IMR-90 (cell line): ENCODE measurements at regions of chr22 and their contacts with region 1.

Region 1: DNA sequence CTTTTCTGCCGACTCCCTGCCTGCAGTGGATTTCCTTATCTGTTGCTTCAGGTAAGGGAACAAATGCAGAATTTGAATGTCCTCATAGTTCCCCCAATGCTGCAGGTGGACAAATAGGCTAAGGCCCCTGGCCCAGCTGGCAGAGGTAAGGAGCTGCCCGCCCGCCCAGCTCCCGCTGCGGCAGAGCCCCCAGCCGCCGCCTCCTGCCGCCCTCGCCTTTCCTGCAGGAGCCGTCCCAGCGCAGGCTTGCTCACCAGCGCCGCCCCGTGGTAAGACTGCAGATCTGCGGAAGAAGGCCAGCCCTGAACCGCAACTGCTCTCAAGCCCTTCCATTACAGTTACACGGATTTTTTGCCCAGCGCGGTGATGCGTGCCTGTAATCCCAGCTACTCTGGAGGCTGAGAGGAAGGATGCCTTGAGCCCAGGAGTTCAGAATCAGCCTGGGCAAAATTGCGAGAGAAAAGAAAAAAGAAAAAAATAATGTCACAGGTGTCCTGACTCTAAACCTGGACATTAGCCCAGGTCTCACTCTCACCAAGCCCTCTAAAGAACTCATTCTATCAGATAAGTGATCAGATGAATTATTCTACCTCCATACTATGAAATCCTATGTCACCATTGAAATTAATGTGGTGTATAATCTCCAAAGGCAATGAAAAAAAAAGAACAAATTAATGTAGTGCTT is 51.2 kb upstream of the EMID1 start:
- DNase-seq: peak; percentile 51
- ATAC-seq: peak; percentile 95
- H3K4me3 ChIP-seq: no peak overlapping the region
- H3K27ac ChIP-seq: no peak overlapping the region
- H3K4me1 ChIP-seq: no peaks in the 10 kb centered on the region; the same call in 1 of the 2 replicates
- H3K27me3 ChIP-seq: peaks cover under 1% of the 10 kb centered on the region
- CTCF ChIP-seq: peak; percentile 91
- POLR2A ChIP-seq: no peak
- RAD21 ChIP-seq: peak; percentile 83

Region 2: GRCh38 chr22:28855355-28856094 is 299.0 kb before region 1 on chr22:
- CTCF ChIA-PET with region 1: interaction called, 3 read pairs
- POLR2A ChIA-PET with region 1: no interaction called
- dilution Hi-C with region 1: no loop called
- in situ Hi-C with region 1: loop called (anchors 5 kb)
- intact Hi-C with region 1: loop called (anchors 1 kb)
- DNase-seq: peak; percentile 78
- ATAC-seq: peak; percentile 96
- H3K4me3 ChIP-seq: no peak overlapping the region
- H3K27ac ChIP-seq: no peak overlapping the region
- H3K4me1 ChIP-seq: no peaks in the 10 kb centered on the region
- H3K27me3 ChIP-seq: no peaks in the 10 kb centered on the region
- CTCF ChIP-seq: peak; percentile 88
- POLR2A ChIP-seq: no peak
- RAD21 ChIP-seq: peak; percentile 92

Region 3: DNA sequence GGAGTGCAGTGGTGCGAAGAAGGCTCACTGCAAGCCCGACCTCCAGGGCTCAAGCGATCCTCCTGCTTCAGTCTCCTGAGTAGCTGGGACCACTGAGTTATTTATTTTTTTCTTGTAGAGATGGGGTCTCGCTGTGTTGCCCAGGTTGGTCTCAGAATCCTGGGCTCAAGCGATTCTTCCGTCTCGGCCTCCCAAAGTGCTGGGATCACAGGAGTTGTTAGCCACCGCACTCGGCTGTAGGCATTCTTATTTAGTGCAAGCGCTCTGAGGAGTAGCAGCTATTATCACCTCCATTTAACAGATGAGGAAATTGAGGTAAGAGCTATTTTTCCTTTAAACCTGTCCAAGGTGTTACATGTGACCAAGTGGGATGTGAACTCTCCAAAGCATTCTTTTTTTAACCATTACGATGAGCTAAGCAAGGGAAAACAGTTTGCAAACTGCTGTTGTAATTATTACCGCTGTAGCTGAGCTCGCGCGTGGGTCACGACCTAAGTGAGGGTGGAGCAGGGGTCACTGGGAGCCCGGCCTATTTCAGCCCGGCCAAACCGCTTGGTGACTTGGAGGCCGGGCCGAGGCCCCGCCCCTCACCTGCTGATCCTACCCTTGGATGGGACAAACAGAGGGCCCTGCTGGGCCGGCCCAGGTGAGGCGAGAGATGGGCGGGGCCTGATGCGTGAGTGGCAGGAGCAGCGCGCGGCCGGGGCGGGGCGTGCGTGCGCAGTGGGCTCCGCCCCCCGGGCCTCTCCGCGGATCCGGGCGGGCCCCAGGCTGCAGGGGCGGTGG is 82.1 kb before region 1 on chr22:
- CTCF ChIA-PET with region 1: interaction called, 3 read pairs
- POLR2A ChIA-PET with region 1: no interaction called
- dilution Hi-C with region 1: no loop called
- in situ Hi-C with region 1: no loop called
- intact Hi-C with region 1: loop called (anchors 5 kb)
- DNase-seq: peak; percentile 42
- ATAC-seq: peak; percentile 99
- H3K4me3 ChIP-seq: peak overlapping the region; percentile 55
- H3K27ac ChIP-seq: no peak overlapping the region
- H3K4me1 ChIP-seq: no peaks in the 10 kb centered on the region
- H3K27me3 ChIP-seq: peaks cover 28% of the 10 kb centered on the region
- CTCF ChIP-seq: no peak
- POLR2A ChIP-seq: no peak
- RAD21 ChIP-seq: no peak

Region 4: GRCh38 chr22:29096736-29097669 is 57.5 kb before region 1 on chr22:
- CTCF ChIA-PET with region 1: no interaction called
- POLR2A ChIA-PET with region 1: no interaction called
- dilution Hi-C with region 1: no loop called
- in situ Hi-C with region 1: no loop called
- intact Hi-C with region 1: no loop called
- DNase-seq: peak; percentile 30
- ATAC-seq: peak; percentile 12; the same call in 1 of the 2 replicates
- H3K4me3 ChIP-seq: no peak overlapping the region
- H3K27ac ChIP-seq: no peak overlapping the region
- H3K4me1 ChIP-seq: peaks cover 17% of the 10 kb centered on the region
- H3K27me3 ChIP-seq: no peaks in the 10 kb centered on the region
- CTCF ChIP-seq: no peak
- POLR2A ChIP-seq: no peak
- RAD21 ChIP-seq: no peak

Region 5: DNA sequence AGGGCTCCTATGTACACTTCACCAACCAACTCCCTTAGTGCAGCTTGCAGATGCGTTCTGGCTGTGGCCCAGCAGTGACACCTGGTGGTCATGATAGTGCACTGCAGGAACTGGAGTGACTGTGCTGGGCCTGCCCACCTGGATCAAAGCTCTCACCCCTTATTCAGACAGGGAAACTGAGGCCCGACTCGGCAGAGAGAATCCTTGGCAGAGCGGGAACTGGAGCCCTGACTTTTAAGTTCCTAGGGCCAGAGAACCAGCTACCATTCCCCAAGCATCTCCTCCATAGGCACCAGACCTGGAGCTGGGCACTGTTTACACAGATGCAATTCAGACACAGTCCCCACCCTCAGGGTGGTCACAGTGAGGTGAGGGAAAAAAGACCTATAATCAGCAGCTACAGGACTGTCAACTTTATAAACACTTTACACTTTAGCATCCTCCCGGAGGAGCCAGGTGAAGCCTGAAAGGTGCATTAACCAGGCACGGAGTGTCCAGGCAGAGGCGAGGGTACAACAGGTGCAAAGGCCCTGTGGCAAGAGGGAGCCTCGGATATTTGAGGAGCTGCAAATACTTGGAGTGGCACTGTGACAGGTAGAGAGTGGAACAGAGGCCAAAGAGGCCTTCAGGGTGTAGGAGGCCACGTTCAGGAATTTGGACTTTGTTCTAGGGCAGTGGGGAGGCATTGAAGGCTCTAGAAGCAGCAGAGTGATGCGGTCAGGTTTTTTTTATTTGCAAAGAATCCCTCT is 91.3 kb after region 1 on chr22:
- CTCF ChIA-PET with region 1: interaction called, 5 read pairs
- POLR2A ChIA-PET with region 1: no interaction called
- dilution Hi-C with region 1: no loop called
- in situ Hi-C with region 1: no loop called
- intact Hi-C with region 1: loop called (anchors 2 kb)
- DNase-seq: peak; percentile 54
- ATAC-seq: peak; percentile 100
- H3K4me3 ChIP-seq: no peak overlapping the region
- H3K27ac ChIP-seq: no peak overlapping the region
- H3K4me1 ChIP-seq: no peaks in the 10 kb centered on the region
- H3K27me3 ChIP-seq: peaks cover 4% of the 10 kb centered on the region
- CTCF ChIP-seq: peak; percentile 95
- POLR2A ChIP-seq: no peak
- RAD21 ChIP-seq: peak; percentile 96